A673 (cell line): ENCODE measurements at regions of chr2 and their contacts with region 1.

Region 1: DNA sequence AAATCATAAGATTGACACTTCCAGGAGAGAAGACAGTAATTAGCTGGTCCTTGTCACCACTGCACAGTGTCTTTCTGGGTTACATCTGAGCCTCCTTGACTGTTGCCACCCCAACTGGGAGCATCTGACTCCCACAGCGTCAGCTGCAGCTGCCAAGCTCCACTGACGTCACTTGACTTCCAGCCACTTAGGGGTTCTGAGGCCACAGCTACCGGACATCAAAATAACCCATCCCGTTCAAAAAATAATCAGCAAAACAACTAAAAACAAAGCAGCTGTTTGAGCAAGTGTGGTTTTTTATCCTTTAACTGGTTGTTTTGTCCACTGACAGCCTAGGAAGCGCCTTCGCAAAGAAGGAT is 206.5 kb upstream of the AGAP1 start:
- DNase-seq: no peak
- H3K4me3 ChIP-seq: no peak overlapping the region
- H3K27ac ChIP-seq: no peak overlapping the region
- H3K4me1 ChIP-seq: peaks cover 17% of the 10 kb centered on the region
- H3K27me3 ChIP-seq: no peaks in the 10 kb centered on the region
- CTCF ChIP-seq: no peak

Region 2: DNA sequence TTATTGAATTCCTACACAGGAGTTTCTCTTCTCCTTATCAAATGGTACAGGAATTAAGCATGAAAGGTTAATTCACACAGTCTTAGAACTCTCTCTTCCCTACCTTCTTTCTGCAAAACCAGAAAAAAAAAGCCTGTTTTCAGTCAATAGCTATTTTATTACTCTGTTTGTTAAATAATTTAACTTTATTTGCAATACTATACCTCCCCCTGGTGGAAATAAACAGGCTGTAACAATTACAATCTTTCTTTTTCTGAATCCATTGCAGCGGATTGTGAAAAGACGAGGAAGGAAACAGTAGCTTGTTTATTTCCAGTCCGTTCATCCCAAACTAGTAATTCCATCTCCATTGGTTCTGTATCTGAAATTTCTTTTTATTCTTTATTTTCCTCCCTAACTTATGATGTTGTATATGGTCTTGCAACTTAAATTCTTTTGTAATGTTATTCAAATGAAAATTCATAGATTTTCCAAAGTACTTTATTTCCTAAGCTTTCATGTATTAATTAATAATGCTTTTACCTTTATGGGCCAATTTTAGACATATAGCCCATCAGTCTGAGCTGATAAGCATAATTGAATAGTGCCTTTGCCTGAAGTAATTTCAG is 170.4 kb before region 1 on chr2:
- CTCF ChIA-PET with region 1: no interaction called
- POLR2A ChIA-PET with region 1: no interaction called
- intact Hi-C with region 1: no loop called
- DNase-seq: peak; percentile 79
- H3K4me3 ChIP-seq: no peak overlapping the region
- H3K27ac ChIP-seq: no peak overlapping the region
- H3K4me1 ChIP-seq: no peaks in the 10 kb centered on the region
- H3K27me3 ChIP-seq: no peaks in the 10 kb centered on the region
- CTCF ChIP-seq: peak; percentile 74

Region 3: GRCh38 chr2:235300368-235301201 is 13.2 kb after region 1 on chr2:
- CTCF ChIA-PET with region 1: no interaction called
- POLR2A ChIA-PET with region 1: interaction called, 10 read pairs
- intact Hi-C with region 1: no loop called
- DNase-seq: peak; percentile 56
- H3K4me3 ChIP-seq: no peak overlapping the region
- H3K27ac ChIP-seq: no peak overlapping the region
- H3K4me1 ChIP-seq: no peaks in the 10 kb centered on the region
- H3K27me3 ChIP-seq: no peaks in the 10 kb centered on the region
- CTCF ChIP-seq: no peak